ENCODE measurements at regions of chr1 and their contacts with region 1.

Region 1: GRCh38 chr1:13662493-13662892 is 37.5 kb upstream of the PRDM2 start:
- DNase-seq: peak in 2 of 5 donors; percentile 50 to 60
- H3K4me3 ChIP-seq: no peak overlapping the region
- H3K27ac ChIP-seq: no peak overlapping the region
- H3K4me1 ChIP-seq: peaks cover 1% of the 10 kb centered on the region
- H3K27me3 ChIP-seq: no peaks in the 10 kb centered on the region
- CTCF ChIP-seq: no peak
- EP300 ChIP-seq: no peak
- POLR2A ChIP-seq: no peak

Region 2: GRCh38 chr1:13583966-13584791 is 78.3 kb before region 1 on chr1:
- intact Hi-C with region 1: loop called in 1 of 4 experiments (anchors 10 kb)
- DNase-seq: peak; percentile 65 to 80 (median 74)
- H3K4me3 ChIP-seq: peak overlapping the region; percentile 53
- H3K27ac ChIP-seq: peak overlapping the region; percentile 87 to 91
- H3K4me1 ChIP-seq: peaks cover 2% of the 10 kb centered on the region
- H3K27me3 ChIP-seq: no peaks in the 10 kb centered on the region
- CTCF ChIP-seq: no peak
- EP300 ChIP-seq: no peak
- POLR2A ChIP-seq: no peak

Region 3: DNA sequence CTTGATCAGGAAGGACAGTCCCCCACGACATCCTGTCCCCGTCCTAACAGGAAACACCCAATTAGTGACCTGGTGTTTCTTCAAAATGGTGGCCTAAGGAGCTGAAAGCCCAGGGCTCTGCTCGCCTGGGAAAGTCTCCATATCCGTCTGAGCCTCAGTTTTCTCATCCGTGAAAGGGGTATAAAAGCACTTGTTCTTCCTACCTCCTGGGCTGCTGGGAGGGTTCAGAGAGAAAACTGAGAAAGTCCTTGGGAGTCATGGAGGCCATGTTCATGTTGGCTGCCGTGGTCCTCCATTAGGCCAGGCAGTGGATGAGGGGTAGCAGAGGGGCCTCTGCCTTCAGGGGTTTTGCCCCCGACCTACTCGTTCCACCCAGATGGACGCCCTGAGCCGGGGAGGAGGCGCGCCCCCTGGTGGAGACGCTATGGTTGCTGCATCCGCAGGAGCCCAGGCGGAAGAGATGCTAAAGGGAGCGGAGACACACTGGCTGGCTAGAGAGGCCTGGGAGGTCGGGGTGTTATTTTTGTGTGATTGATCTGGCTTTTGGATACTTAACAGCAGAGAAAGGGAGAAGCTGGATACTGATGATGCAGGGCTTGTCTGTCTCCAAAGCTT is 151.0 kb after region 1 on chr1:
- intact Hi-C with region 1: loop called in 1 of 4 experiments (anchors 10 kb)
- DNase-seq: peak; percentile 55 to 74 (median 65)
- H3K4me3 ChIP-seq: no peak overlapping the region
- H3K27ac ChIP-seq: no peak overlapping the region
- H3K4me1 ChIP-seq: peaks cover 19% of the 10 kb centered on the region
- H3K27me3 ChIP-seq: no peaks in the 10 kb centered on the region
- CTCF ChIP-seq: peak in 2 of 3 donors; percentile 29 to 37
- EP300 ChIP-seq: no peak
- POLR2A ChIP-seq: no peak

Region 4: DNA sequence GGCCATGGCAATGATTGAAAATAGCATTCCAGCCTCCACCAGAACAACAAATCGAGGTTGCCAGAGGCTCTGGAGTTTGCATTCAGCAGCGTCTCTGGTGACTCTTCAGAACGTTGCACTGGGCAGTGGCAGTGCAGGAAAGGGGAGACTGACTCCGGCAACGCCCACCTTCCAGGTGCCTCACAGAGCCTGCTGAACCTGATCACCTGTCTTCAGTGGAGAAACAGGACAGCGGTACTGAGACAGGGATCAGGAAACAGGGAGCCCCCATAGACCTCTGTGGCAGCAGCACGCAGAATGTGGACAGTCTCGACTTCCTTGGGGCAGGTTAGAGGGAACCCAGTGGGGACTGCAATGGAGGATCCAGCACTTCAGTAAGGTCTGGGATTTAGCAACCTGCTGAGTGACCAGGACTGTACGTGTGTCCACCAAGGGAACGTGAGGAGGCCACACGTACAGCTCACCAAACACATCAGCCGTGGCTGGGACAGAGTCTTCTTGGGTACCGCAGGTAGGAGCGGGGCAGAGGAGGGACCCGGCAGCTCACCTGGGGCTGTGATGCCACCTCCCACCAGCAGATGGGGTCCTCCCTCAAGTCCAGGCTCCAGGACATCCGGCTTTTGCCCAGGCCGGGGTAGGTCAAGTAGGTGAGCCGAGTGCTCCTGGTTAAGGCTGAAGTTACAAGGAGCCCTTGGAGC is 166.1 kb after region 1 on chr1:
- intact Hi-C with region 1: loop called in 2 of 4 experiments (anchors 5 to 10 kb)
- DNase-seq: peak; percentile 55 to 78 (median 58)
- H3K4me3 ChIP-seq: no peak overlapping the region
- H3K27ac ChIP-seq: no peak overlapping the region
- H3K4me1 ChIP-seq: peaks cover 7% of the 10 kb centered on the region
- H3K27me3 ChIP-seq: no peaks in the 10 kb centered on the region
- CTCF ChIP-seq: peak in 2 of 3 donors; percentile 58 to 61
- EP300 ChIP-seq: no peak
- POLR2A ChIP-seq: no peak

Measured in ovary (tissue), 10 donors.